ENCODE measurements at regions of chr4 and their contacts with region 1.

Region 1: GRCh38 chr4:147590249-147590920 is 26.8 kb upstream of the TMEM184C start:
- DNase-seq: peak; percentile 52
- H3K27ac ChIP-seq: no peak overlapping the region
- CTCF ChIP-seq: peak; percentile 82

Region 2: DNA sequence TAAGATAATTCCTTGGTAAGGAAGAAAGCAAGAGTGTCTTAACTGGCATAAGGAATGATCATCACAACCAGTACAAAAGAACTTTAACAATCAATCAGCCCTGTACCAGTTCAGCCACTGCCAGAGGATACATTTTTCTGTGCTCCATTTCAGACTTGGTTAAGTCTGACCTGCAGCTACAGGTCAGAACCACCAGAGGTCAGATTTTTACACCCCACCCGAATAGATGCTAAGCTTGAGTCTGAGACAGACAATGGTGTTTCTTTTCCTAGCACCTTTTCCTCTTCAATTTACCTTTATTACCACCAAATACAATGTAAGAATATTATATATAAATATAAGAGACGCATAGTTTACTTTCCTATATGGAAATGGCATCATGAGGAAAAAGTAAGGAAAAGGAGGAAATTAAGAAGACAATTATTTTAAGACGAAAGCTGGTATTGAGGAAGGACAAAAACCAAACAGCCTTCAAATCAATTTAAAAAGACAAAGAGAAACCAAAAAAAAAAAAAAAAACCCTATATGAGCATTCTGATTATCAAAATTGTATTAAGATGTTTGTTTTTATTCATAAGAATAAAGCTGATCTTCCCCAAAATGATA is 429.4 kb before region 1 on chr4:
- CTCF ChIA-PET with region 1: interaction called, 20 read pairs
- POLR2A ChIA-PET with region 1: no interaction called
- DNase-seq: peak; percentile 70
- H3K27ac ChIP-seq: no peak overlapping the region
- CTCF ChIP-seq: peak; percentile 84

Region 3: DNA sequence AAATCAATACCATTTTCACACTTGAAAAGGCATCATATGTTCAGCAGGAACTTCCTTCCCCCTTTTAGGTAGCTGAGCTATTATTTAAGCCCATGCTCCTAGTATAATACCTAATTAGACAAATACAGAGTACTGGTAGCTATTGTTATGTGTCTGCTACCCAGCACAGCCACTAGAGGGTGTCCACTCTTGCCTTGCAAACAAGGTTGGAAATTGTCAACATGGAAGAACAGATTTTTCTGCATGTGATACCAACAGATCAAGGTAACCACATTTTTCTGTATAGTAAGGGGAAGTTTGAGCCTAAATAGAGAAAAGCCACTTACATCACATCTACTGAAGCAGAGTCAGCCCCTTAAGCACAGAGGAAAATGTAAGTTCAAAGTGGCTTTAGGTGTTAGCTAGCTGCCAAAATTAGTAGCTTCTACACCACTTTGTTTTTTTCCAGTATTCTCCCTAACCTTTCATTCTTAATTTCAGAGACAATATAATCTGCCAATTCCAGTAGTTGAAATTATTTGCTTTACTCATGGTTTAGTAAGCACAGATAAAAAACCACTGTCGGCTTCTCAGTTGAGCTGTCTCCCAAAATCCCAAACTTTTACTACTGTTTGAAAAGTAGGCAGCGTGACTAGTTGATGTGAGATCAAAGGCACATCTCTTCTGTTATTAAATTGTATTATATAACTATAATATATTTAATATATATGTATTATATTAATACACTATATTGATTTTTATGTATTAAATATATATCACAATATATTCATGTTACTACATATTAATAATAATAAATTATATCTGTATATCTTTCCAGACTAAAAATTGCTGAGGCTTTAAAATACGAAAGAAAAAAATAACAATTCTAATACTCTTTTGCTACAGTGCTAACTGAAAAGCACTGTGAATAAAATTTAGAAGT is 71.3 kb before region 1 on chr4:
- CTCF ChIA-PET with region 1: interaction called, 26 read pairs
- POLR2A ChIA-PET with region 1: no interaction called
- DNase-seq: peak; percentile 55
- H3K27ac ChIP-seq: no peak overlapping the region
- CTCF ChIP-seq: peak; percentile 91

Region 4: GRCh38 chr4:147714575-147715401 is 124.4 kb after region 1 on chr4:
- CTCF ChIA-PET with region 1: no interaction called
- POLR2A ChIA-PET with region 1: no interaction called
- DNase-seq: peak; percentile 66
- H3K27ac ChIP-seq: peak overlapping the region; percentile 59; the same call in 1 of the 2 replicates
- CTCF ChIP-seq: no peak

Region 5: GRCh38 chr4:147843162-147843561 is 252.8 kb after region 1 on chr4:
- CTCF ChIA-PET with region 1: no interaction called
- POLR2A ChIA-PET with region 1: no interaction called
- DNase-seq: peak; percentile 73
- H3K27ac ChIP-seq: no peak overlapping the region
- CTCF ChIP-seq: no peak

Region 6: DNA sequence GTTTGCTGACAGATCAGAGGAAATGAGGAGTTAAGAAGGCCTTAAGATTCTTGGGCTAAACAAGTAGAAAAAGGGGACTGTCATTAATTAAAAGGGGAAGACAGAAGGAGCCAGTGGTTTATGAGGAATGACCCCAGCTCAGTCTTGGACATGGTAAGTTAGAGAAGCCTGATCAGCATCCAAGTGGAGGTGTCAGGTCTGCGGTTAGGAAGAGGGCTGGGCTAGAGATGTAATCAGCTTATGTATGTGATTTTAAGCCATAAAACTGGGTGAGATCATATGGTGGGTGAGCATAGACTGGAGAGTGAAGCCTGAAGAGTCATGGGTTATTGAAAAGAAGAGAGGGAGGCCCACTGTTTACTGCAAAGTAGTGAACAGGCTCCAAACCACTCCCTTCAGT is 605.8 kb after region 1 on chr4:
- CTCF ChIA-PET with region 1: no interaction called
- POLR2A ChIA-PET with region 1: no interaction called
- DNase-seq: no peak
- H3K27ac ChIP-seq: no peak overlapping the region
- CTCF ChIP-seq: no peak